ENCODE measurements at regions of chrX and their contacts with region 1.

Region 1: DNA sequence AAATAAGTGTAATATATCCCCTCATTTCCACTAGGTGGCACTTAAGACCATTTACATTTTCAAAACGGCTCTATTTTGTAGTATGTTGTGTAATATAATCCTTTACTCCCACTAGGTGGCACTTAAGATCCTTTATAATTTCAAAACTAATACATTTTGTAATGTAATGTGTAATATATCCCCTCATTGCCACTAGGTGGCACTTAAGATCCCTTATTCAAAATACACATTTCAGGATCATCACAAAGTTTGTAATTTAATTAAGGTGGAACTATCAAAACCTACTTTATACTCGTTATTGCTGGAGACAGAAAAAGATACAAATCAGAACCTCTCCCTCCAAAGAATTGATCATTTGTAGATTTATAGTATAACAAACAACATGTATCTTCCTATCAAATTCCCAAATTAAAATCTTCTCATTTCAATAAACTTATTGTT is 132.5 kb downstream of the ARHGAP6 start:
- DNase-seq: peak; percentile 52
- H3K4me3 ChIP-seq: no peak overlapping the region
- H3K27ac ChIP-seq: no peak overlapping the region
- H3K27me3 ChIP-seq: no peaks in the 10 kb centered on the region
- CTCF ChIP-seq: peak; percentile 59

Region 2: GRCh38 chrX:11143931-11144678 is 389.1 kb before region 1 on chrX:
- CTCF ChIA-PET with region 1: interaction called, 31 read pairs
- POLR2A ChIA-PET with region 1: no interaction called
- DNase-seq: peak; percentile 53
- H3K4me3 ChIP-seq: no peak overlapping the region
- H3K27ac ChIP-seq: no peak overlapping the region
- H3K27me3 ChIP-seq: no peaks in the 10 kb centered on the region
- CTCF ChIP-seq: peak; percentile 52

Region 3: GRCh38 chrX:11381464-11381863 is 151.8 kb before region 1 on chrX:
- CTCF ChIA-PET with region 1: interaction called, 48 read pairs
- POLR2A ChIA-PET with region 1: no interaction called
- DNase-seq: peak; percentile 18
- H3K4me3 ChIP-seq: no peak overlapping the region
- H3K27ac ChIP-seq: no peak overlapping the region
- H3K27me3 ChIP-seq: no peaks in the 10 kb centered on the region
- CTCF ChIP-seq: peak; percentile 55

Region 4: DNA sequence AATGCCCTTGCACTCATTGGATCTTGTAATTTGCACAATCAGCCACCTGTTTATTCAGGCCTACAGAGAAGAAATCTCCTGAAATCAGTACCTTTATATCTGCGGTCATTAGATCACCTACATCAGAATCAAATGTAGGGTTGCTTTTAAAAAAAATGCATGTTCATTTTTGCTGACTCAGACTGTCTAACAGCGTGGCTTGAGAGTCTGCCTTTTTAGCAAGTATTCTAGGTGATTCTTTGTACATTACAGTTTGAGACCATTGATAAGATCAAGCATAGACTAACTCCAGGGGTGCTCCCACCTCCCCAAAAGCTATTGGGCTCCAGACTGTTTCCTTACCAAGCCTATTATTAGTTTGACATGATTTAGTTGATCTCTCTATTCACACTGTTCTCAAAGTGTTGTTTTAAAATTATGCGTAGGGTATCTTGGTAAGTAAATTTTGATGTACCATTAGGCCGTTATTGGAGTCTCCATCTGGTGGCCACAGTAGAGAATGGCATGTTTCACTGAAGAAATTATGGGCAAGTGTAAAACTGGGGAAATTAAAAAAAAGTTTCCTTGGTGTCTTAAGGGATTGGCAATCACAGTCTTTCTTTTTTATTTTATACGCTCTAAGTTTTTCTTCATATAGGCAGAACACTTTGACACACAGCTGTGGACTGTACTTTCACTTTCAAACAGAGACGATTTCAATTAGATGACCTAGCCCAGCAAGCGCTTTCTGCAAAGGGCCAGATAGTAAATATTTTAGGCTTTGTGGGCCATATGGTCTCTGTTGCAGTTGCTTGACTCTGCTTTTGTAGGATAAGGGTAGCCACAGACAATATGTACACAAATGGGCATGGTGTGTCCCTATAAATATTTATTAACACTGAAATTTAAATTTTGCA is 191.1 kb after region 1 on chrX:
- CTCF ChIA-PET with region 1: interaction called, 20 read pairs
- POLR2A ChIA-PET with region 1: no interaction called
- DNase-seq: peak; percentile 1
- H3K4me3 ChIP-seq: no peak overlapping the region
- H3K27ac ChIP-seq: no peak overlapping the region
- H3K27me3 ChIP-seq: no peaks in the 10 kb centered on the region
- CTCF ChIP-seq: peak; percentile 74

Region 5: DNA sequence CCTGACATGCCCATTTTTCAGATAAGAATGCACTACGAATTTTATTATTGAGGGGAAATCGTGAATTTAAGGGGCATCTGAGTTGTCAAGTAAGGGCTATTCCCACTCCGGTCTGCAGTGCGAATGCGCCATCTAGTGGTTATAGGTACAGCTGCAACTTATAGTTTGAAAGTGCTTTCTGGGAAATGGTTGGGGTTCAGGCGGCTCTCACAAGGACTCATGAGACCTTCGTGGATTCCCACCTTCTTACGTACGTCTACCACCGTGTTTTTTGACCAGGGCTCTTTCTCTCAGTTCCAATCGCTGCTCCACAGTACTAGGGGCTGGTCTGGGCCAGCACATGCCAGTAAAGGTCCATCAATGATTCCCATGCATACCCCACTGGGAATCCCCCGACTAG is 237.1 kb after region 1 on chrX:
- CTCF ChIA-PET with region 1: interaction called, 13 read pairs
- POLR2A ChIA-PET with region 1: no interaction called
- DNase-seq: no peak
- H3K4me3 ChIP-seq: no peak overlapping the region
- H3K27ac ChIP-seq: no peak overlapping the region
- H3K27me3 ChIP-seq: no peaks in the 10 kb centered on the region
- CTCF ChIP-seq: peak; percentile 78